ENCODE measurements at regions of chr14 and their contacts with region 1.

Region 1: DNA sequence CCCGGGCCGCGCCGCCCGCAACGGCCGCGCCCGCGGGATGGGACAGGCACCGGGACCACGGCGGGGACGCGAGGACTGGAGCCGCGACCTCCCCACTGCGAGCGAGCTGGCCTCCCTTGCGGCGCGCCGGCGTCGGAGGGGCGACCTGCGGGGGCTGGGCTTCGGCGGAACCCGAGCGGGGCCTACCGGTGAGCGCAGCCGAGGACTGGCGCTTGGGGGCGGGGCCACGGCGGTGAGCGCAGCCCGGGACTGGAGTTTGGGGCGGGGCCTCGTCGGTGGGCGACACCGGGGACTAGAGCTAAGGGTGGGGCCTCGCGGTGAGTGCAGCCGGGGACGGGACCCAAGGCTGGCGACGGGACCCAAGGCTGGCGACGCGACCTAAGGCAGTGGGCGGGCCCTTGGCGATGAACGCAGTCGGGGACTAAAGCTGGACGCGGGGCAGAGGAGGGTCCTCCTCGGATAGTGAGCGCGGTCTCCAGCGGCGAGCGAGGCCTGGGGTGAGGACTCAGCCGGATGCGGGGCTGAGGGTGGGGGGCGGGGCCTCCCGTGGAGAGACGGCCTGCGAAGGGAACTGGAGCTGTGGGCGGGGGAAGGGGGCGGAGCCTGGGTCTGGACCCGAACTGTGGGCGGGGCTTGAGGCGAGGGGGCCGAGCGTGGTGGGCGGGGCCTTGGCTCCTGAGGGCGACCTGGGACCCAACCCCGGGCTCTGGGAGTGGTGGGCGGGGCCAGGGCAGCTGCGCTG is at the start of gene BRF1:
- DNase-seq: peak; percentile 99 to 100 (median 99)
- H3K4me3 ChIP-seq: peak within 1 kb of the TSS; percentile 62
- H3K27ac ChIP-seq: peak within 1 kb of the TSS; percentile 63 to 94
- H3K4me1 ChIP-seq: peaks cover 2% of the 10 kb centered on the region
- H3K27me3 ChIP-seq: no peaks in the 10 kb centered on the region
- CTCF ChIP-seq: peak in 1 of 3 donors; percentile 32
- EP300 ChIP-seq: no peak
- POLR2A ChIP-seq: peak; percentile 57
- total RNA-seq, gene BRF1: 33.3 to 47.3 (median 38.5) TPM

Region 2: DNA sequence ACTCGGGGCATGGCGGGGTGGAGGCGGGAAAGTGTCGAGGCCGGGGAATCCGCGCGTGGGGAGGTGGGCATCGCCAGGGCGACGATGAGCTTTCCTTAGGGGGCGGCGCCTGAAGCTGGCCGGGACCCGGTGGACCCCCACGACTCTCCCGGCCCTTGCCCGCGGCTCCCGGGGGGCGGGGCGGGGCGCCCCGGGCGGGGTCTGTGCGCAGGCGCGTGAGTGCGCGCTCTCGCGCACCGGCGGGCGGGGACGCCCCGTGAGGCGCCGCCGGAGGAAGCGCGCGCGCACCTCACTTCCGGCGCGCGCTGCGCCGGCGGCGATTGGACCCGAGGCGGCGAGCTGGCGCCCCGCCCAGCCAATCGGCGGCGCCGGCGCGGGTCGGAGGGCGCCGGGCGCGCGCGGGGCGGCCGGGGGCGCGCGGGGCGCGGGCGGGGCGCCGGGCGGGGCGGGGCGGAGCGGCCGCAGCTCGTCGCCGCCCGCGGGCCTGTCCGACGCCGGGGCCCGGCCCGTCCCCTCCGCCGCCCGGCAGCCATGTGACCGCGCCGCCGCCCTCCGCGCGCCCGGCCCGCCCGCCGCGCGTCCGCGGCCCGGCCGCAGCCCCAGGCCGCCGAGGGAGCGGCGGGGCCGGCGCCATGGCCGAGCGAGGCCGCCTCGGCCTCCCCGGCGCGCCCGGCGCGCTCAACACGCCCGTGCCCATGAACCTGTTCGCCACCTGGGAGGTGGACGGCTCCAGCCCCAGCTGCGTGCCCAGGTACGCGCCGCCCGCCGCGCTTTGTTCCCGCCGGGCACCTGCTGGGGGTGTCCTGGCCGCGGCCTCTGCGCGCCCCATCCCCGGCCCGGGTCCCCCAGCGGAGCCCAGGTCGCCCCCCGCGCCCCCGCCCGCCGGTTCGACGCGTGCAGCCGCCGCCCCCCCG is 13.6 kb after region 1 on chr14 and contains the start of gene PACS2:
- intact Hi-C with region 1: loop called in 1 of 4 experiments (anchors 2 kb)
- DNase-seq: peak; percentile 72 to 89 (median 84)
- H3K4me3 ChIP-seq: peak within 1 kb of the TSS; percentile 85
- H3K27ac ChIP-seq: peak within 1 kb of the TSS; percentile 92 to 98
- H3K4me1 ChIP-seq: peaks cover 14% of the 10 kb centered on the region
- H3K27me3 ChIP-seq: no peaks in the 10 kb centered on the region
- CTCF ChIP-seq: no peak
- EP300 ChIP-seq: no peak
- POLR2A ChIP-seq: peak; percentile 30
- total RNA-seq, gene PACS2: 41.4 to 91.9 (median 60.7) TPM

Region 3: DNA sequence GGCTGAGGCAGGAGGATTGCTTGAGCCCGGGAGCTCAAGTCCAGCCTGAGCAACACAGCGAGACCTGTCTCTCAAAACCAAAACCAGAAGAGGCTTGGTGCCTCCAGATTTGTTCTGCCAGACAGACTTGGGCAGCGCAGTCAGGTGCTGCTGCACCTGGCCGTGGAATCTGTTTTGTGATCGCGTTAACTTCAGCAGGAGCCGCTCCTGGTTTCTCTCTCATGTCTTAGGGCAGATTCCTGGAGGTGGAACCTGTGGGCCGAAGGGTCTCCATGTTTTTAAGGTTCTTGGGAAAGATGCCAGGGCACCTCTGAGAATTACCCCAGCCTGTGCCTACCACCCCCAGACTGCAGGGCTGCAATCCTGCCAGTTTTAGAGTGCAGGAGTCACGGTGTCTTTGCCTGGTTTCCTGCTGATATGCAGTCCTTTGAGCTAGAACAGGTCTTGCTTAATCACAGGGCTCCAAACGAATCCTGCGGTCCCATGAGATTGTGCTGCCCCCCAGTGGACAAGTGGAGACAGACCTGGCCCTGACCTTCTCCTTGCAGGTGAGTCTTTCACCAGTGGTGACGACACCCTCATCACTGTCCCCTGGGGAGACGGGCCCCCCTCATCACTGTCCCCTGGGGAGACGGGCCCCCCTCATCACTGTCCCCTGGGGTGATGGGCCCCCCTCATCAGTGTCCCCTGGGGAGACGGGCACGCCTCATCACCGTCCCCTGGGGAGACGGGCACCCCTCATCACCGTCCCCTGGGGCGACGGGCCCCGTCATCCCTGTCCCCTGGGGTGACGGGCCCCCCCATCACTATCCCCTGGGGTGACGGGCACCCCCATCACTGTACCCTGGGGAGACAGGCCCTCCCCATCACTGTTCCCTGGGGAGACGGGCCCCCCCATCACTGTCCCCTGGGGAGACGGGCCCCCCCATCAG is 51.2 kb after region 1 on chr14:
- intact Hi-C with region 1: loop called in 1 of 4 experiments (anchors 2 kb)
- DNase-seq: peak; percentile 66 to 86 (median 81)
- H3K4me3 ChIP-seq: no peak overlapping the region
- H3K27ac ChIP-seq: no peak overlapping the region
- H3K4me1 ChIP-seq: no peaks in the 10 kb centered on the region
- H3K27me3 ChIP-seq: no peaks in the 10 kb centered on the region
- CTCF ChIP-seq: peak; percentile 51 to 67 (median 58)
- EP300 ChIP-seq: no peak
- POLR2A ChIP-seq: no peak

Measured in ovary (tissue), 10 donors.